ENCODE measurements at regions of chr6 and their contacts with region 1.

Region 1: DNA sequence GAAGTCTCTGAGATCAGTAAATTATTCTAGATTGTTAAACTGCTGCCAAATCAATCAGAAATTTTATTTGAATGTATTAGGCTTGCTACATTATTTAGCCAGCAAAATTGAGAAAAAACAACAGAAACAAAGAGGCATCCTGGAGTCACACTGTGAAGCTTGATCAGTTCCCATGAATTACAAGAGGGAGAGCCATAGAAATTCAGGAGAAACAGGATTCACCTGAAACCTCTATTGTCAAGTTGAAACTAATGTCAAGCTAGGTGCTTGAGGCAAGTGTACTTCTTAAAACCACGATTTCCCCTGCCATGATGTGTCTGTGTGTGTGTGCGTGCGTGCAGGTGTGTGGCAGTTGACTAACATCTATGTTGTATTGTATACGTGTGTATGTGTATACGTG is 439.1 kb upstream of the NOX3 start:
- DNase-seq: no peak
- ATAC-seq: no peak
- H3K4me3 ChIP-seq: no peak overlapping the region
- H3K27ac ChIP-seq: no peak overlapping the region
- H3K4me1 ChIP-seq: no peaks in the 10 kb centered on the region
- H3K27me3 ChIP-seq: no peaks in the 10 kb centered on the region
- CTCF ChIP-seq: no peak
- POLR2A ChIP-seq: no peak
- RAD21 ChIP-seq: no peak

Region 2: GRCh38 chr6:155578251-155578650 is 316.5 kb before region 1 on chr6:
- CTCF ChIA-PET with region 1: no interaction called
- POLR2A ChIA-PET with region 1: no interaction called
- RAD21 ChIA-PET with region 1: no interaction called
- intact Hi-C with region 1: loop called (anchors 1 kb)
- DNase-seq: no peak
- ATAC-seq: no peak
- H3K4me3 ChIP-seq: no peak overlapping the region
- H3K27ac ChIP-seq: no peak overlapping the region
- H3K4me1 ChIP-seq: no peaks in the 10 kb centered on the region
- H3K27me3 ChIP-seq: no peaks in the 10 kb centered on the region
- CTCF ChIP-seq: no peak
- POLR2A ChIP-seq: no peak
- RAD21 ChIP-seq: no peak